ENCODE measurements at regions of chr7 and their contacts with region 1.

Region 1: DNA sequence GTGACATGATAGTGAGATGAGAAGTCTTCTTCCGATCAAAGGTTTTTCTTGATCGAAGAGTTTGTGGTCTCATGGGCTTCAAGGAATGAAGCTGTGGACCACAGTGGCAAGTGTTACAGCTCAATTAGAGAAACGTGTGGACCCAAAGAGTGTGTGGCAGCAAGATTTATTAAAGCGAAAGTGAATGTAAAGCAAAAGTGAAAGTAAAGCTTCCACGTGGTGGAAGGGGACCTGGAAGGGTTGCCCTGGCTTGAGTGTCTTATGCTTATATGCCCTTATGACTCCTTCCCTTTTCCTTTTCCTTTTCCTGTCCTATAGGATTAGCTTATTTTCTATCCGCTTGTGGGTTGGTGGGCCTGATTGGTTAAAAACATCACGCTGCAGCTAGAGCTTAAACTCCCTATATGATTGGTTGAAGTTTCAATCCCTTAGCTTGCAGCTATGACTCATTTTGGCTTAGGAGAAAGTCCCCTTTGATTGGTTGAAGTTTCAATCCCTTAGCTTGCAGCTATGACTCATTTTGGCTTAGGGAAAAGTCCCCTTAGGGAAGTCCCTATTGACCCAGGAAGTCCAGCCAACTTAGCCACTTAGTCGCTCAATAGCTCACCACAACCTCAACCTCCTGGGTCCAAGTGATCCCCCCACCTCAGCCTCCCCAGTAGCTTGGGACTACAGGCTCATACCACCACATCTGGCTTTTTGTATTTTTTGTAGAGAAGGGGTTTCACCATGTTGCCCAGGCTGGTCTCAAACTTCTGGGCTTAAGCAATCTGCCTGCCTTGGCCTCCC is 34.7 kb downstream of the MRPS24 start:
- DNase-seq: peak; percentile 46
- ATAC-seq: no peak
- H3K4me3 ChIP-seq: no peak overlapping the region
- H3K27ac ChIP-seq: no peak overlapping the region
- H3K4me1 ChIP-seq: 0 out of 2 replicates have a peak, but pooled peaks cover 3% of the 10 kb centered on the region
- H3K27me3 ChIP-seq: no peaks in the 10 kb centered on the region
- CTCF ChIP-seq: no peak

Region 2: GRCh38 chr7:43260980-43261878 is 573.4 kb before region 1 on chr7:
- CTCF ChIA-PET with region 1: no interaction called
- POLR2A ChIA-PET with region 1: no interaction called
- intact Hi-C with region 1: no loop called
- DNase-seq: peak; percentile 88
- ATAC-seq: peak; percentile 99
- H3K4me3 ChIP-seq: no peak overlapping the region
- H3K27ac ChIP-seq: no peak overlapping the region
- H3K4me1 ChIP-seq: no peaks in the 10 kb centered on the region
- H3K27me3 ChIP-seq: no peaks in the 10 kb centered on the region
- CTCF ChIP-seq: peak; percentile 97

Region 3: GRCh38 chr7:43764039-43764761 is 70.5 kb before region 1 on chr7:
- CTCF ChIA-PET with region 1: no interaction called
- POLR2A ChIA-PET with region 1: interaction called, 16 read pairs
- intact Hi-C with region 1: loop called (anchors 2 kb)
- DNase-seq: peak; percentile 57
- ATAC-seq: peak; percentile 56
- H3K4me3 ChIP-seq: peak overlapping the region; percentile 45
- H3K27ac ChIP-seq: peak overlapping the region; percentile 55
- H3K4me1 ChIP-seq: peaks cover 47% of the 10 kb centered on the region
- H3K27me3 ChIP-seq: no peaks in the 10 kb centered on the region
- CTCF ChIP-seq: no peak

Measured in PC-3 (cell line).